ENCODE measurements at regions of chr14 and their contacts with region 1.

Region 1: DNA sequence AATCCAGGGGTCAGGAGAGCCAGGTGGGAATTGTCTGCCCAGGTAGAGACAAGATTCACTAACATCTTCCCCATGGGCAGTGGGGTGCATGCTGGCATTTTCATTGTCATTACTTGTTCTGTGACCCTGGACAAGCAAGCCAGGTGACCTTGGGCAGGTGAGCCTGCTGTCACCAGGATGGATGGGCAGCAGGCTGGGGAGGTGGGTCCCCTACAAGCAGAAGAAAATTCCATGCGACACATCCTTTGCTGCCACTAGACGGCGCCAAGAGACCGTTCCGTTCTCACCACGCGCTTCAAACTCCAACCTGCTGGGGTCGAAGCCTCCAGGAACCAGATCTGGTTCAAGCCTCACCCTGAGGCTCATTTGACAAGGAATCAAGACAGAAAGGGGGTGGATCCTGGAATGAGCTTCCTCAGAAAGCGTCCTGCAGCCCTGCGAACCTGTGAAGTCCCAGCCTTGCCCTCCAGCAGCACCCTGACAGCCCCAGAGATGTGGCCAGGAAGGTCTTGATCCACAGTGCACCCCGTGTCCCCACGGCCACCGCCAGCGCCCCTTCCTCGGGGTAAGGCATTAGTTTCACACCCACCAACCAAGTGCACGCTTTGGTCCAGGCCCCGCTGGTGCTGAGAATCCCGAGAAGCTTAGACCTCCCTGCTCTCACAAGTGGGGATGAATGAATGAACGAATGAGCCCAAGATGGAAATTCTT is 3.2 kb upstream of the DYNC1H1 start:
- DNase-seq: peak; percentile 77 to 89
- ATAC-seq: peak; percentile 11 to 60
- H3K4me3 ChIP-seq: no peak overlapping the region
- H3K27ac ChIP-seq: peak overlapping the region; percentile 82 to 99
- H3K4me1 ChIP-seq: peaks cover 28% of the 10 kb centered on the region
- CTCF ChIP-seq: peak; percentile 96
- EP300 ChIP-seq: no peak
- POLR2A ChIP-seq: no peak
- RAD21 ChIP-seq: peak; percentile 96 to 97

Region 2: GRCh38 chr14:101535232-101535631 is 425.9 kb before region 1 on chr14:
- CTCF ChIA-PET with region 1: no interaction called
- POLR2A ChIA-PET with region 1: no interaction called
- DNase-seq: peak; percentile 51 to 56
- ATAC-seq: peak in 1 of 2 experiments; percentile 48; a peak in 3 of 6 replicates
- H3K4me3 ChIP-seq: no peak overlapping the region
- H3K27ac ChIP-seq: peak overlapping the region; percentile 45 to 77; a peak in 5 of 6 replicates
- H3K4me1 ChIP-seq: peaks cover 12% of the 10 kb centered on the region
- CTCF ChIP-seq: no peak
- EP300 ChIP-seq: no peak
- POLR2A ChIP-seq: no peak
- RAD21 ChIP-seq: no peak

Region 3: DNA sequence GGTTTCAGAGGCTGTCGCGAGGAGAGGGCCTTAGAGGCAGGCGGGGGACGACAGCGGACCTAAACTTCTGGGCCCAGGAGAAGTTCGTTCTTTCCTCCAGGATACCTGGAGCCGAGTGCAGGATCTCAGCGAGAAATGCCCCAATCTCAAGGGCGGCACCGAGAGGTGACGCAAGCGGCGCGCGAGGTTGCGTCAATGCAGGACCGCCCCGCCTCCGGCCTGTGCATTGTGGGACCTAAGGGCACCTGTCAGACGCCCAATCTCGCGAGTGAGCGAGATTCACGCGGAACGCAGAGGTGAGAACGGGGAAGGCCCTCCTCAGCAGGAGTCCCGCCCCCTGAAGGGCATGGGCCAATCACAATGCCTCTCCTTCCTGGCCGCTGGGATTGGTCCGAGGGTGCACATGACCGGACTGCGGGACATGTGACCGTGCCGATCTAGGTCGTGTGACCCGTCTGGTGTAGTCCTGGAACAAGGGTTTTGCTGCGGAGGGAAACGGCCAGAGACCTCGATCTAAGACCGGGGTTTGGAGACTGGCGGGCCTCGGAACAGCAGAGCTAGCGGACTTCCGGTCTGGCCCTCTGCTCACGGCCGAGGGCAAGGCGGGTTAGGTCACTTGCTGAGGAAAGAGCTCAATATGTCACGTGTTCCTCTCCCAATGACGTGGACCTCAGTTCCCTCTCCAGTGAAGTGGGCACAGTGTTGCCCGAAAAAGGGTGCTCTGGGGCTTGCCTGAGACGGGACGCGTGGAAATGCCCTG is 13.1 kb before region 1 on chr14:
- CTCF ChIA-PET with region 1: interaction called, 31 read pairs
- POLR2A ChIA-PET with region 1: interaction called, 3 read pairs
- DNase-seq: peak; percentile 98 to 100
- ATAC-seq: peak; percentile 98 to 99
- H3K4me3 ChIP-seq: peak overlapping the region; percentile 82
- H3K27ac ChIP-seq: peak overlapping the region; percentile 86 to 96
- H3K4me1 ChIP-seq: peaks cover 11% of the 10 kb centered on the region; the same call in 1 of the 3 replicates
- CTCF ChIP-seq: no peak
- EP300 ChIP-seq: no peak
- POLR2A ChIP-seq: peak; percentile 90
- RAD21 ChIP-seq: no peak

Region 4: GRCh38 chr14:101980251-101981099 is 19.3 kb after region 1 on chr14:
- CTCF ChIA-PET with region 1: interaction called, 37 read pairs
- POLR2A ChIA-PET with region 1: interaction called, 3 read pairs
- DNase-seq: peak; percentile 56 to 78
- ATAC-seq: peak; percentile 89 to 94
- H3K4me3 ChIP-seq: peak overlapping the region; percentile 17; the same call in 1 of the 3 replicates
- H3K27ac ChIP-seq: peak overlapping the region; percentile 50 to 70
- H3K4me1 ChIP-seq: peaks cover 52% of the 10 kb centered on the region
- CTCF ChIP-seq: no peak
- EP300 ChIP-seq: no peak
- POLR2A ChIP-seq: no peak
- RAD21 ChIP-seq: no peak

Region 5: DNA sequence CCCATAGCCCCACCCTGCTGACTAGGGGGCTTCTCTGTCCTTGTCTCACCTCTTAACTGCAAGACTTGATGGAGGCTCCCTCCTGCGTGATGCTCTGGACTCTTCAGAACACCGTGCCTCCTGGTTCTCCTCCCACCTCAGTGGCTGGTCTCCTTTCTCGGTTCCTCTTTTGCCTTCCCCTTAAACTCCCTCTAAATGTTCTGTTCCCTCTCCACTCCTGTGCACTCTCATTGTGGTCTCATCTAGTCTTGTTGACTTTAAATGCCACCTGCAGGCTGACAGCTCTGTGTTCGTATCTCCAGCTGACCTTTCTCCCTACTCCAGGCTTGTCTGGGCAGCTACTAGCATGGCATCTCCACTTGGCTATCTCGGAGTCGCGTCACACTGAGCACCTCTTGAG is 31.5 kb after region 1 on chr14:
- CTCF ChIA-PET with region 1: interaction called, 24 read pairs
- POLR2A ChIA-PET with region 1: no interaction called
- DNase-seq: no peak
- ATAC-seq: no peak
- H3K4me3 ChIP-seq: no peak overlapping the region
- H3K27ac ChIP-seq: no peak overlapping the region
- H3K4me1 ChIP-seq: no peaks in the 10 kb centered on the region
- CTCF ChIP-seq: no peak
- EP300 ChIP-seq: no peak
- POLR2A ChIP-seq: no peak
- RAD21 ChIP-seq: no peak

Region 6: GRCh38 chr14:102020058-102020971 is 59.1 kb after region 1 on chr14:
- CTCF ChIA-PET with region 1: interaction called, 17 read pairs
- POLR2A ChIA-PET with region 1: no interaction called
- DNase-seq: no peak
- ATAC-seq: no peak
- H3K4me3 ChIP-seq: no peak overlapping the region
- H3K27ac ChIP-seq: no peak overlapping the region
- H3K4me1 ChIP-seq: no peaks in the 10 kb centered on the region
- CTCF ChIP-seq: no peak
- EP300 ChIP-seq: no peak
- POLR2A ChIP-seq: no peak
- RAD21 ChIP-seq: no peak

Region 7: DNA sequence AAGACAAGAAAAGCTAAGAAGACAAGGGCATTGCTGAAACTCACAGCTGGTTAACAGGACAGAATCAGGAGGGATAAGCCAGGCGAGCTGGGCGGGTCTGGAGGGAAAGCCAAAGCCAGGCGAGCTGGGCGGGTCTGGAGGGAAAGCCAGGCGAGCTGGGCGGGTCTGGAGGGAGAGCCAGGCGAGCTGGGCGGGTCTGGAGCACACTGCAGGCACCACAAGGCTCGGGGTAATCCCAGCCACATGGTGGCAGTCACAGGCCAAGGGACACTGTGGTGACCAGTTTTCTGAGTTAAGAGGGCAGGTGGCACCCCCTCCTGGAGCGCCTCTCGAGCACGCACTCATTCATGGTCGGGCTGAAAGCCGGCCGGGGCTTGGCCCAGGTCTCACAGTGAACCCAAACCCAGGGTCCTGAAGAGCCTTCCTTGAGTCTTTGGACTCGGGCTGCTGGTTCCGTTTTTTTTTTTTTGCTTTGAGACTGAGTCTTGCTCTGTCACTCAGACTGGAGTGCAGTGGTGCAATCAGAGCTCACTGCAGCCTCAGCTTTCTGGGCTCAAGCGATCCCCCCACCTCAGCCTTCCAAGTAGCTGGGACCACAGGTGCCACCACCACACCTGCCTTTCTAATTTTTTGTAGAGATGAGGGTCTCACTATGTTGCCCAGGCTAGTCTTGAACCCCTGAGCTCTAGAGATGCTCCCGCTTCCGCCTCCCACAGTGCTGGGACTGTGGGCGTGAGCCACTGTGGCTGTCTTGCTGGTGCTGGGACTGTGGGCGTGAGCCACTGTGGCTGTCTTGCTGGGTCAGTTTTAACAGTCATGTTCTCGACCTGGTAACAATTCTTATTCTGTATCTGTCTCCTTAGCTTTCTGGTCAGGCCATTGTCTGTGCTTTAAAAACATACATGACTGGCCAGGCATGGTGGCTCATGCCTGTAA is 85.4 kb after region 1 on chr14:
- CTCF ChIA-PET with region 1: interaction called, 22 read pairs
- POLR2A ChIA-PET with region 1: no interaction called
- DNase-seq: peak; percentile 58 to 81
- ATAC-seq: peak; percentile 77 to 87
- H3K4me3 ChIP-seq: no peak overlapping the region
- H3K27ac ChIP-seq: no peak overlapping the region
- H3K4me1 ChIP-seq: no peaks in the 10 kb centered on the region
- CTCF ChIP-seq: peak; percentile 36
- EP300 ChIP-seq: no peak
- POLR2A ChIP-seq: no peak
- RAD21 ChIP-seq: peak; percentile 38 to 58; a peak in 4 of 5 replicates

Region 8: GRCh38 chr14:102096214-102097114 is 135.3 kb after region 1 on chr14:
- CTCF ChIA-PET with region 1: interaction called, 42 read pairs
- POLR2A ChIA-PET with region 1: no interaction called
- DNase-seq: peak; percentile 70 to 76
- ATAC-seq: peak; percentile 82 to 92
- H3K4me3 ChIP-seq: no peak overlapping the region
- H3K27ac ChIP-seq: 0 out of 6 replicates have a peak overlapping the region, but pooled peaks of 1 of the 2 experiments have one; percentile 8
- H3K4me1 ChIP-seq: peaks cover 18% of the 10 kb centered on the region
- CTCF ChIP-seq: peak; percentile 87
- EP300 ChIP-seq: no peak
- POLR2A ChIP-seq: no peak
- RAD21 ChIP-seq: peak; percentile 89 to 91

Measured in A549 (cell line).